ENCODE measurements at regions of chr1 and their contacts with region 1.

Region 1: GRCh38 chr1:94025383-94026340 is 95.3 kb downstream of the ABCA4 start:
- DNase-seq: peak; percentile 76
- H3K4me3 ChIP-seq: no peak overlapping the region
- H3K27ac ChIP-seq: no peak overlapping the region
- H3K4me1 ChIP-seq: no peaks in the 10 kb centered on the region
- H3K27me3 ChIP-seq: no peaks in the 10 kb centered on the region
- CTCF ChIP-seq: peak; percentile 74

Region 2: GRCh38 chr1:94039514-94039870 is 13.8 kb after region 1 on chr1:
- CTCF ChIA-PET with region 1: interaction called, 13 read pairs
- POLR2A ChIA-PET with region 1: no interaction called
- intact Hi-C with region 1: no loop called
- DNase-seq: peak; percentile 84
- H3K4me3 ChIP-seq: no peak overlapping the region
- H3K27ac ChIP-seq: no peak overlapping the region
- H3K4me1 ChIP-seq: no peaks in the 10 kb centered on the region
- H3K27me3 ChIP-seq: no peaks in the 10 kb centered on the region
- CTCF ChIP-seq: peak; percentile 97

Region 3: DNA sequence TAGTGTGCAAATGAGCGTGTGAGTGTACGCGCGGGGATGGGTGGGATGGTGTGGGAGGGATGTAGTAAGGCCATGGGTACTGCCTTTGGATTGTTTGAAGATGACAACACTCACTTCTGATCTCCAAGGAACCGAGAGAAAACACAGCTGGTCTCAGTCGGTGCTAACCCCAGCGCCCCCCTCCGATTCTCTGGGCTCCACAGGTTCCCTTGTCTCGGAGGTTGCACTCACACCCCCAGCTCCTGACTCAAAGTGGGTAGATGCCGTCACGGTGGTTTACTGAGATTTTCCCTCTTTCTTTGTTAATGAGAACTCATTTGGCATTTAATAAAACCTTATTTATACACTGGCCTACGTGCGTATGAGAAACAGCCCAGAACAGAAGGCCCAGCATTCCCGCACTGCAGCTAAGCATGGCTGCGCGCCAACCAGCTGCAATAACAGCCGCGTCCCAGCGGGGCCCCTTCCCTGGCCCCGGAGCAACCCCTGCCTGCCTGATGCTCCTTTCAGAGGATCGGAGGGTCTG is 69.5 kb after region 1 on chr1:
- CTCF ChIA-PET with region 1: no interaction called
- POLR2A ChIA-PET with region 1: no interaction called
- intact Hi-C with region 1: no loop called
- DNase-seq: peak; percentile 69
- H3K4me3 ChIP-seq: no peak overlapping the region
- H3K27ac ChIP-seq: no peak overlapping the region
- H3K4me1 ChIP-seq: peaks cover 49% of the 10 kb centered on the region
- H3K27me3 ChIP-seq: no peaks in the 10 kb centered on the region
- CTCF ChIP-seq: no peak

Measured in A673 (cell line).